H1 (cell line): ENCODE measurements at regions of chrX and their contacts with region 1.

Region 1: DNA sequence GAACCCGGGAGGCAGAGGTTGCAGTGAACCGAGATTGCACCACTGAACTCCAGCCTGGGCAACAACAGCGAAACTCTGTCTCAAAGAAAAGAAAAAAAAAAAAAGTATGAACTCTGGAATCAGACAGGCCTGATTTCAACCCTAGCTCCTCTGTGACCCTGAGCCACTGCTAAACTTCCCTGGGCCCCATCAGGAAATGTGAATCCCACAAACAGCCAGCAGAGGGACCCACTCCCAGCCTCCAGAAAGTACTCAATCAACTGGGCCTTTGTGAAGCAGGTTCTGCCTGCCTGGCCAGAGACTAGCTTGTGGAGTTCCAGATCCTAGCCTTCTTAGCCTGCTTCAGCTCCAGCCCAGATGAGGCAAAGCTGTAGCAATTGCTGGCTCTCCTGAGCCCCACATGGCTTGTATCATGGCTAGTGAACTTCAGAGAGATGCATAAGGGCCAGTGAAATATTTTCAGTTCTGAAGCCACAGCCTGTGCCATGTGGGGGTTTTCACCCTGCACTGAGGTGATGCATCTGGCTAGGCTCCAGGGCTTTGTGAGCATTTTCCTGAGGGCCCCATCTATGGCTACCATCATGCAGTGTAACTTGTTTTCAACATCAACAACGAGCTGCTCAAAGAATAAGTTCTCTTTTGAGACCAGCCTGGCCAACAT is 7.2 kb upstream of the IDS start:
- DNase-seq: peak in 1 of 2 experiments; percentile 60
- H3K4me3 ChIP-seq: no peak overlapping the region
- H3K27ac ChIP-seq: no peak overlapping the region; the same call in 1 of the 2 replicates
- H3K4me1 ChIP-seq: peaks cover 0 to 3% (median 1%) of the 10 kb centered on the region in 4 experiments; a peak in 3 of 7 replicates
- H3K27me3 ChIP-seq: no peaks in the 10 kb centered on the region
- CTCF ChIP-seq: peak; percentile 52 to 73 (median 67)
- EP300 ChIP-seq: no peak
- POLR2A ChIP-seq: no peak
- RAD21 ChIP-seq: peak; percentile 59 to 71

Region 2: GRCh38 chrX:149493567-149494559 is 18.5 kb before region 1 on chrX:
- CTCF ChIA-PET with region 1: interaction called, 13 read pairs
- POLR2A ChIA-PET with region 1: no interaction called
- DNase-seq: no peak
- H3K4me3 ChIP-seq: no peak overlapping the region
- H3K27ac ChIP-seq: no peak overlapping the region
- H3K4me1 ChIP-seq: no peaks in the 10 kb centered on the region
- H3K27me3 ChIP-seq: no peaks in the 10 kb centered on the region
- CTCF ChIP-seq: peak in 2 of 3 experiments; percentile 16 to 56; a peak in 3 of 4 replicates
- EP300 ChIP-seq: no peak
- POLR2A ChIP-seq: no peak
- RAD21 ChIP-seq: peak; percentile 29 to 40; a peak in 3 of 4 replicates

Region 3: DNA sequence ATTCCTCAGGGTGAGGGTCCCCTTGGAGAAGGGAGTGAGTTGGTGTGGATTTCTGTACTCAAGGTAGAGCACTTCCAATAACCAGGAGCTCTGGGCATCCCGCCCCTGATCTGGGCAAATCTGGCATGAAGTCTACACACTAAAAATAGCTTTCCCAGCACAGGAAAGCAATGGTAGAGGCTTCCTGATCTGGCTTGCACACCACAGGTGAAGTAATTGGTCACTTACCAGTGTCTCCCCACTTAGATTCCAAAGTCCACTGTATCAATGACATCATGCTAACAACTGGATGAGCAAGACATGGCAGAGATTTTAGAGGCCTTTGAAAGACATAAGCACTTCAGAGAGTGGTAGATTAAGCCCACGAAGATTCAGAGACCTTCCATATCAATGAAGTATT is 10.6 kb after region 1 on chrX:
- CTCF ChIA-PET with region 1: interaction called, 18 read pairs
- POLR2A ChIA-PET with region 1: interaction called, 4 read pairs
- DNase-seq: no peak
- H3K4me3 ChIP-seq: no peak overlapping the region
- H3K27ac ChIP-seq: no peak overlapping the region
- H3K4me1 ChIP-seq: peaks cover 0 to 6% (median 0%) of the 10 kb centered on the region in 4 experiments; a peak in 2 of 7 replicates
- H3K27me3 ChIP-seq: no peaks in the 10 kb centered on the region
- CTCF ChIP-seq: no peak
- EP300 ChIP-seq: no peak
- POLR2A ChIP-seq: no peak
- RAD21 ChIP-seq: no peak

Region 4: GRCh38 chrX:149531599-149531998 is 19.2 kb after region 1 on chrX:
- CTCF ChIA-PET with region 1: interaction called, 12 read pairs
- POLR2A ChIA-PET with region 1: interaction called, 3 read pairs
- DNase-seq: no peak
- H3K4me3 ChIP-seq: no peak overlapping the region
- H3K27ac ChIP-seq: no peak overlapping the region
- H3K4me1 ChIP-seq: no peaks in the 10 kb centered on the region
- H3K27me3 ChIP-seq: no peaks in the 10 kb centered on the region
- CTCF ChIP-seq: no peak
- EP300 ChIP-seq: no peak
- POLR2A ChIP-seq: no peak
- RAD21 ChIP-seq: no peak

Region 5: GRCh38 chrX:149539283-149540130 is 27.2 kb after region 1 on chrX:
- CTCF ChIA-PET with region 1: interaction called, 11 read pairs
- POLR2A ChIA-PET with region 1: no interaction called
- DNase-seq: peak; percentile 79 to 84
- H3K4me3 ChIP-seq: peak overlapping the region; percentile 56 to 71 (median 58)
- H3K27ac ChIP-seq: no peak overlapping the region; the same call in 1 of the 2 replicates
- H3K4me1 ChIP-seq: peaks cover 0 to 5% (median 4%) of the 10 kb centered on the region in 4 experiments; a peak in 3 of 7 replicates
- H3K27me3 ChIP-seq: no peaks in the 10 kb centered on the region; a peak in 1 of 7 replicates
- CTCF ChIP-seq: no peak
- EP300 ChIP-seq: no peak
- POLR2A ChIP-seq: no peak
- RAD21 ChIP-seq: no peak